Activated naive CD4-positive, alpha-beta T cell treated with anti-CD3 and anti-CD28 coated beads for 36 hours (primary cell): ENCODE measurements at regions of chr15 and their contacts with region 1.

Region 1: GRCh38 chr15:28975766-28976179 is 90.0 kb downstream of the APBA2 start:
- DNase-seq: peak; percentile 88
- H3K4me3 Mint-ChIP-seq: no peak overlapping the region
- H3K27ac Mint-ChIP-seq: no peak overlapping the region
- H3K4me1 Mint-ChIP-seq: peaks cover 20% of the 10 kb centered on the region
- H3K27me3 Mint-ChIP-seq: no peaks in the 10 kb centered on the region

Region 2: GRCh38 chr15:28885630-28886430 is 89.9 kb before region 1 on chr15 and contains the start of gene APBA2:
- CTCF ChIA-PET with region 1: interaction called, 8 read pairs
- intact Hi-C with region 1: loop called (anchors 1 kb)
- DNase-seq: peak; percentile 52
- H3K4me3 Mint-ChIP-seq: peak within 1 kb of the TSS; percentile 77
- H3K27ac Mint-ChIP-seq: peak within 1 kb of the TSS; percentile 50
- H3K4me1 Mint-ChIP-seq: peaks cover 37% of the 10 kb centered on the region
- H3K27me3 Mint-ChIP-seq: no peaks in the 10 kb centered on the region
- total RNA-seq, gene APBA2: 16.2 to 18.3 TPM

Region 3: DNA sequence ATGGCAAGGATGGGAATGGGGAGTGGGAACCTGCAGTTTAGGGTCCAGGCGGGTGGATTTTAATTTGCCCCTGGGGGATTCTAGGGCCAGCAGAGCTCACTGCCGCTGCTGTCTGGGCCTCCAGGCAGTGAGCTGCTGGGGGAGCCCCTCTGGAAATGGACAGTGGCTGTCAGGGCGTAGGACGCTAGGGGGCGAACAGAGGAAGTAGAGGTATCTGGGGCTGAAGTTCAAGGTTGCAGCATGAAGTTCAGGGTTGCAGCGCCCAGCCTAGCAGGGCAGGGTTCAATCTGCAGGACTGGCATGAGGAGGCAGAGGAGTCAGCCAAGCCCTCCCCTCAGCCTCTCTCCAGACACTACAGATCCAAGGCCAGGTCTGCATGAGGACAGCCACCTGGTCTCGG is 40.4 kb before region 1 on chr15:
- CTCF ChIA-PET with region 1: interaction called, 5 read pairs
- intact Hi-C with region 1: loop called (anchors 1 kb)
- DNase-seq: peak; percentile 74
- H3K4me3 Mint-ChIP-seq: no peak overlapping the region
- H3K27ac Mint-ChIP-seq: no peak overlapping the region
- H3K4me1 Mint-ChIP-seq: peaks cover 61% of the 10 kb centered on the region
- H3K27me3 Mint-ChIP-seq: no peaks in the 10 kb centered on the region

Region 4: GRCh38 chr15:28962851-28963710 is 12.7 kb before region 1 on chr15:
- CTCF ChIA-PET with region 1: interaction called, 6 read pairs
- intact Hi-C with region 1: loop called (anchors 1 kb)
- DNase-seq: no peak
- H3K4me3 Mint-ChIP-seq: no peak overlapping the region
- H3K27ac Mint-ChIP-seq: no peak overlapping the region
- H3K4me1 Mint-ChIP-seq: peaks cover 40% of the 10 kb centered on the region
- H3K27me3 Mint-ChIP-seq: no peaks in the 10 kb centered on the region

Region 5: GRCh38 chr15:29596266-29596665 is 620.5 kb after region 1 on chr15:
- CTCF ChIA-PET with region 1: no interaction called
- intact Hi-C with region 1: no loop called
- DNase-seq: no peak
- H3K4me3 Mint-ChIP-seq: no peak overlapping the region
- H3K27ac Mint-ChIP-seq: no peak overlapping the region
- H3K4me1 Mint-ChIP-seq: no peaks in the 10 kb centered on the region
- H3K27me3 Mint-ChIP-seq: peaks cover 21% of the 10 kb centered on the region

Region 6: DNA sequence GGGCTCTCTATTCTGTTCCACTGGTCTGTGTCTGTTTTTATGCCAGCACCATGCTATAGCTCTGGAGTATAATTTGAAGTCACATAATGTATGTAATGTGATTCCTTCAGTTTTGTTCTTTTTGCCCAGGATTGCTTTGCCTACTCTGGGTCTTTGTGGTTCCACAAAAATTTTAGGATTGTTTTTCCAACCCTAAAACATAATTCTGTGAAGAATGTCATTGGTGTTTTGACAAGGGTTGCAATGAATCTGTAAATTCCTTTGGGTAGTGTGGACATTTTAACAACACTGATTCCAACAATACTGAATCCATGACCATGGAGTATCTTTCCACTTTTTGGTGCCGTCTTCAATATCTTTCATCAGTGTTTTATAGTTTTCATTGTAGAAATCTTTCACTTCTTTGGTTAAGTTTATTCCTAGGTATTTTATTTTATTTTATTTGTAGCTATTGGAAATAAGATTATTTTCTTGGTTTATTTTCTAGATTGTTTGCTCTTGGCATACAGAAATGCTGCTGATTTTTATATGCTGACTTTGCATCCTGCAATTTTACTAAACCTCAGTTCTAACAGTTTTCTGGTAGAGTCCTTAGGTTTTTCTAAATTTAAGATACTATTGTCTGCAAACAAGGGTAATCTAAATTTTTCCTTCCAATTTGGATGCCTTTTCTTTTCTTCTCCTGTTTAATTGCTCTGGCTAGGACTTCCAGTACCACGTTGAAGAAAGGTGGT is 816.8 kb after region 1 on chr15:
- CTCF ChIA-PET with region 1: no interaction called
- intact Hi-C with region 1: no loop called
- DNase-seq: no peak
- H3K4me3 Mint-ChIP-seq: no peak overlapping the region
- H3K27ac Mint-ChIP-seq: no peak overlapping the region
- H3K4me1 Mint-ChIP-seq: no peaks in the 10 kb centered on the region
- H3K27me3 Mint-ChIP-seq: peaks cover 40% of the 10 kb centered on the region